ENCODE measurements at regions of chr9 and their contacts with region 1.

Region 1: GRCh38 chr9:122810306-122810946 is 10.5 kb downstream of the OR1K1 start:
- DNase-seq: peak; percentile 74 to 87 (median 78)
- ATAC-seq: peak; percentile 96
- H3K4me3 ChIP-seq: no peak overlapping the region
- H3K27ac ChIP-seq: no peak overlapping the region
- H3K4me1 ChIP-seq: no peaks in the 10 kb centered on the region; a peak in 1 of 5 replicates
- H3K27me3 ChIP-seq: peaks cover 0 to 4% of the 10 kb centered on the region in 2 experiments; a peak in 4 of 5 replicates
- CTCF ChIP-seq: peak; percentile 81 to 92 (median 83)
- EP300 ChIP-seq: no peak
- POLR2A ChIP-seq: no peak
- RAD21 ChIP-seq: peak; percentile 94 to 96

Region 2: DNA sequence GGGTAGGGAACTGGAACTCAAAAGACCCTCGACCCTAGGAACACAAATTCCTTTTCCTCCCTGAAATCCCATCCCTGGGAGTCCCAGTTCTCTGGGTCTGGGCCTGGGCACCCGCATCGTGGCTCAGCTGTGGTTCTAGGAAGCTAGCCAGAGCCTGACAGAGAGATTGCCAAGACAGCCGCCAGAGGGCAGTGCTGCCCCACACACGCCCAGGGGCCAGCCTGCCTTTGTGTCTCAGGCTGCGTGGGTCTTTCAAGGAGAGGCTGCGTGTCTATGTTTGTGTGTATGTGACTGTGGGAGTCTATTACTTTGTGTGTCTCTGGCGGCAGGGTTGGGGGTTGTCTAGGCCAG is 685.3 kb before region 1 on chr9:
- CTCF ChIA-PET with region 1: interaction called, 21 read pairs
- POLR2A ChIA-PET with region 1: no interaction called
- in situ Hi-C with region 1: loop called (anchors 10 kb)
- intact Hi-C with region 1: loop called (anchors 2 kb)
- DNase-seq: peak; percentile 87 to 88 (median 88)
- ATAC-seq: peak; percentile 91
- H3K4me3 ChIP-seq: no peak overlapping the region
- H3K27ac ChIP-seq: no peak overlapping the region
- H3K4me1 ChIP-seq: peaks cover 0 to 30% of the 10 kb centered on the region in 2 experiments; a peak in 3 of 5 replicates
- H3K27me3 ChIP-seq: peaks cover 0 to 18% of the 10 kb centered on the region in 2 experiments; a peak in 3 of 5 replicates
- CTCF ChIP-seq: peak; percentile 94 to 96 (median 96)
- EP300 ChIP-seq: no peak
- POLR2A ChIP-seq: no peak
- RAD21 ChIP-seq: peak; percentile 99 to 100

Region 3: GRCh38 chr9:122360891-122361290 is 449.5 kb before region 1 on chr9:
- CTCF ChIA-PET with region 1: no interaction called
- POLR2A ChIA-PET with region 1: no interaction called
- in situ Hi-C with region 1: loop called (anchors 5 kb)
- intact Hi-C with region 1: no loop called
- DNase-seq: no peak
- ATAC-seq: no peak
- H3K4me3 ChIP-seq: no peak overlapping the region
- H3K27ac ChIP-seq: no peak overlapping the region
- H3K4me1 ChIP-seq: peaks cover 0 to 3% of the 10 kb centered on the region in 2 experiments; a peak in 1 of 5 replicates
- H3K27me3 ChIP-seq: peaks cover 2 to 12% of the 10 kb centered on the region in 2 experiments; a peak in 2 of 5 replicates
- CTCF ChIP-seq: no peak
- EP300 ChIP-seq: no peak
- POLR2A ChIP-seq: no peak
- RAD21 ChIP-seq: no peak

Region 4: DNA sequence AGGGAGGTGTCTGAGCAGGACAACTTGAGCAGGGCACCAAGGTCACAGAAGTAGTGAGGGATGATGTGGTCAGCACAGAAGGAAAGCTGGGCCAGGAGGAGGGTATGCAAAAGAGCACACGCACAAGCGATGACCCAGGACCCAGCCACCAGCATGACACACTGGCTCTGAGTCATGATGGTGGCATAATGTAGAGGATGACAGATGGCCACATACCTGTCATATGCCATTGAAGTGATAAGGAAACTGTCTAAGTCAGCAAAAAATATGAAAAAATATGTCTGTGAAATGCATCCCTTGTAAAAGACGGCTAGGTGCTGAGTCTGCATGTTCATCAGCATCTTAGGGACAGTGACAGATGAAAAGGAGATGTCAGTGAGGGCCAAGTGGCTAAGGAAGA is 333.1 kb before region 1 on chr9:
- CTCF ChIA-PET with region 1: no interaction called
- POLR2A ChIA-PET with region 1: no interaction called
- in situ Hi-C with region 1: no loop called
- intact Hi-C with region 1: loop called (anchors 5 kb)
- DNase-seq: peak in 1 of 4 experiments; percentile 11
- ATAC-seq: no peak
- H3K4me3 ChIP-seq: no peak overlapping the region
- H3K27ac ChIP-seq: no peak overlapping the region
- H3K4me1 ChIP-seq: peaks cover 0 to 4% of the 10 kb centered on the region in 2 experiments; a peak in 2 of 5 replicates
- H3K27me3 ChIP-seq: peaks cover 3 to 16% of the 10 kb centered on the region in 2 experiments; a peak in 3 of 5 replicates
- CTCF ChIP-seq: no peak
- EP300 ChIP-seq: no peak
- POLR2A ChIP-seq: no peak
- RAD21 ChIP-seq: no peak

Region 5: GRCh38 chr9:122955961-122956360 is 145.5 kb after region 1 on chr9:
- CTCF ChIA-PET with region 1: no interaction called
- POLR2A ChIA-PET with region 1: no interaction called
- in situ Hi-C with region 1: no loop called
- intact Hi-C with region 1: no loop called
- DNase-seq: no peak
- ATAC-seq: no peak
- H3K4me3 ChIP-seq: no peak overlapping the region
- H3K27ac ChIP-seq: no peak overlapping the region
- H3K4me1 ChIP-seq: no peaks in the 10 kb centered on the region
- H3K27me3 ChIP-seq: no peaks in the 10 kb centered on the region
- CTCF ChIP-seq: no peak
- EP300 ChIP-seq: no peak
- POLR2A ChIP-seq: no peak
- RAD21 ChIP-seq: no peak

Region 6: GRCh38 chr9:123349691-123350480 is 539.5 kb after region 1 on chr9:
- CTCF ChIA-PET with region 1: no interaction called
- POLR2A ChIA-PET with region 1: no interaction called
- in situ Hi-C with region 1: no loop called
- intact Hi-C with region 1: loop called (anchors 5 kb)
- DNase-seq: peak; percentile 85 to 89 (median 87)
- ATAC-seq: peak; percentile 86
- H3K4me3 ChIP-seq: peak overlapping the region; percentile 21; the same call in 1 of the 2 replicates
- H3K27ac ChIP-seq: no peak overlapping the region; the same call in 2 of the 3 replicates
- H3K4me1 ChIP-seq: peaks cover 10 to 32% of the 10 kb centered on the region in 2 experiments; a peak in 3 of 5 replicates
- H3K27me3 ChIP-seq: peaks cover 2 to 15% of the 10 kb centered on the region in 2 experiments; a peak in 3 of 5 replicates
- CTCF ChIP-seq: peak; percentile 93 to 96 (median 96)
- EP300 ChIP-seq: no peak
- POLR2A ChIP-seq: no peak
- RAD21 ChIP-seq: peak; percentile 98 to 99

Measured in K562 (cell line).